ENCODE measurements at regions of chr19 and their contacts with region 1.

Region 1: GRCh38 chr19:46101293-46101692 is 23.2 kb downstream of the IGFL3 start:
- DNase-seq: no peak
- H3K4me3 ChIP-seq: no peak overlapping the region
- H3K27ac ChIP-seq: no peak overlapping the region
- H3K4me1 ChIP-seq: no peaks in the 10 kb centered on the region
- H3K27me3 ChIP-seq: peaks cover 31% of the 10 kb centered on the region
- CTCF ChIP-seq: no peak
- EP300 ChIP-seq: no peak
- POLR2A ChIP-seq: no peak

Region 2: DNA sequence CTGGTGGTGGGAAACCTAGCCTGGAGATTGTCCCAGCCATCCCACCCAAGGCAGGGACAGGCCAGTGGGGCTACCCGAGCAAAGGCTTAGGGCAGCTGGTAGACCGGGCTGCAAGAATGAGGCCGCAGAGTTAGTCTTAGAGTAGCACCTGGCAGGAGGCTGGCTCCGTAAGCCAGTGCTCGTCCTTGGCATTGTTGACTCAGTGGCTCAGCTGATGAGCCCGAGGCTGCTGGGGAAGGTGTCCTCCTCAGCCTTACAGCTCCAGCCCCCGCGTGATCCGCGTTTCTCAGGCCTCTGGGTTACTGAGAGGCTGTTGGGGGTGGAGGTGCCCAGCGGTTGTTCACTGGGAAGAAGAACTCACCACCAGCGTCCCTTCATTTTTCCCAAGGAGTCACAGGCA is 983.6 kb before region 1 on chr19:
- in situ Hi-C with region 1: no loop called
- intact Hi-C with region 1: loop called (anchors 5 kb)
- DNase-seq: no peak
- H3K4me3 ChIP-seq: no peak overlapping the region
- H3K27ac ChIP-seq: peak overlapping the region; percentile 10 to 69 (median 58)
- H3K4me1 ChIP-seq: peaks cover 14 to 67% (median 54%) of the 10 kb centered on the region in 4 donors
- H3K27me3 ChIP-seq: no peaks in the 10 kb centered on the region
- CTCF ChIP-seq: no peak
- EP300 ChIP-seq: no peak
- POLR2A ChIP-seq: no peak

Region 3: GRCh38 chr19:46022431-46023310 is 78.6 kb before region 1 on chr19 and contains the start of gene PGLYRP1:
- in situ Hi-C with region 1: no loop called
- intact Hi-C with region 1: no loop called
- DNase-seq: no peak
- H3K4me3 ChIP-seq: no peak within 1 kb of the TSS
- H3K27ac ChIP-seq: no peak within 1 kb of the TSS
- H3K4me1 ChIP-seq: peaks cover 0 to 4% (median 0%) of the 10 kb centered on the region in 4 donors
- H3K27me3 ChIP-seq: peaks cover 57% of the 10 kb centered on the region
- CTCF ChIP-seq: no peak
- EP300 ChIP-seq: no peak
- POLR2A ChIP-seq: no peak
- total RNA-seq, gene PGLYRP1: not detected

Region 4: DNA sequence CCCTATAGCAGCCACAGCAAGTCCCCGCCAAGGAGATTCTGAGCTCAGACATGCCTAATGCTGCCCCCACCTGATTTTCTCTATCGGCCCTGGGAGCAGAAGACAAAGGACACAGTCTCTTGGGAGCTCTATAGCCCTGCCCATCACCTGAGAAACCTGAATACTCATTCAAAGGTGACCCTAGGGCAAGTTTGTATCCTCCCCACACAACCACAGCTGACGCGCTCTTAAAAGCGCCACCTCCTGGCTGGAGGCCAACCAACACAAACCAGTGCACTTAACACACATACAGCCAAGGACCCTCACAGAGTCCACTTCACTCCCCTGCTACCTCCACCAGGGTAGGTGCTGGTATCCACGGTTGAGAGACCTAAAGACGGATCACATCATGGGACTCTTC is 51.7 kb before region 1 on chr19:
- in situ Hi-C with region 1: no loop called
- intact Hi-C with region 1: no loop called
- DNase-seq: no peak
- H3K4me3 ChIP-seq: no peak overlapping the region
- H3K27ac ChIP-seq: no peak overlapping the region
- H3K4me1 ChIP-seq: no peaks in the 10 kb centered on the region
- H3K27me3 ChIP-seq: peaks cover 22% of the 10 kb centered on the region
- CTCF ChIP-seq: no peak
- EP300 ChIP-seq: no peak
- POLR2A ChIP-seq: no peak

Region 5: DNA sequence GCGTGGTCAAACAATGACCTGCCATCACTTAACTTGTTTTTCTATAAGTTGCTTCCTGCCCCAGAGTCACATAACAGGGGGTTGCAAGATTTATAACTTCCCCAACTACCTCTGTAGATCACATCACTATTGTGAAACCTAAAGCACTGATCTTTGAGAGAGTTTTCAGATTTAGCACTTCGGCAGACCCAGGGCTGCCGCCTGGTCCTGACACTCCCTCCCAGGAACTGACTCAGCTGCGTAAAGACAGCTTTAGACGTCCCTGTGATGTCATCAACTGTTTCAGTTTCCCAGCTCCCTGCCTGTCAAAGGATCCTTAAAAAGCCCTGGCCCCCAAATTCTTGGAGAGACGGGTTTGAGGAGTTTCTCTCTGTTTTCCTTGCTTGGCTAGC is 80.1 kb after region 1 on chr19:
- in situ Hi-C with region 1: no loop called
- intact Hi-C with region 1: no loop called
- DNase-seq: no peak
- H3K4me3 ChIP-seq: no peak overlapping the region
- H3K27ac ChIP-seq: no peak overlapping the region
- H3K4me1 ChIP-seq: no peaks in the 10 kb centered on the region
- H3K27me3 ChIP-seq: peaks cover 10% of the 10 kb centered on the region
- CTCF ChIP-seq: no peak
- EP300 ChIP-seq: no peak
- POLR2A ChIP-seq: no peak